Activated CD8-positive, alpha-beta T cell treated with anti-CD3 and anti-CD28 coated beads for 36 hours (primary cell): ENCODE measurements at regions of chr20 and their contacts with region 1.

Region 1: GRCh38 chr20:44954166-44954565 is 6.0 kb downstream of the TOMM34 start:
- DNase-seq: no peak
- ATAC-seq: no peak
- H3K4me3 Mint-ChIP-seq: no peak overlapping the region
- H3K27ac Mint-ChIP-seq: no peak overlapping the region
- H3K4me1 Mint-ChIP-seq: peaks cover 44% of the 10 kb centered on the region
- H3K27me3 Mint-ChIP-seq: no peaks in the 10 kb centered on the region
- CTCF ChIP-seq: no peak

Region 2: GRCh38 chr20:44942264-44942973 is 11.7 kb before region 1 on chr20:
- CTCF ChIA-PET with region 1: interaction called, 9 read pairs
- POLR2A ChIA-PET with region 1: interaction called, 30 read pairs
- intact Hi-C with region 1: no loop called
- DNase-seq: no peak
- ATAC-seq: no peak
- H3K4me3 Mint-ChIP-seq: no peak overlapping the region
- H3K27ac Mint-ChIP-seq: peak overlapping the region; percentile 30
- H3K4me1 Mint-ChIP-seq: peaks cover 2% of the 10 kb centered on the region
- H3K27me3 Mint-ChIP-seq: no peaks in the 10 kb centered on the region
- CTCF ChIP-seq: no peak

Region 3: GRCh38 chr20:45128071-45128470 is 173.9 kb after region 1 on chr20:
- CTCF ChIA-PET with region 1: no interaction called
- POLR2A ChIA-PET with region 1: no interaction called
- intact Hi-C with region 1: no loop called
- DNase-seq: no peak
- ATAC-seq: no peak
- H3K4me3 Mint-ChIP-seq: no peak overlapping the region
- H3K27ac Mint-ChIP-seq: no peak overlapping the region
- H3K4me1 Mint-ChIP-seq: no peaks in the 10 kb centered on the region
- H3K27me3 Mint-ChIP-seq: peaks cover 23% of the 10 kb centered on the region
- CTCF ChIP-seq: no peak